ENCODE measurements at regions of chr1 and their contacts with region 1.

Region 1: GRCh38 chr1:150067184-150068036 is at the start of gene VPS45:
- DNase-seq: peak; percentile 93

Region 2: DNA sequence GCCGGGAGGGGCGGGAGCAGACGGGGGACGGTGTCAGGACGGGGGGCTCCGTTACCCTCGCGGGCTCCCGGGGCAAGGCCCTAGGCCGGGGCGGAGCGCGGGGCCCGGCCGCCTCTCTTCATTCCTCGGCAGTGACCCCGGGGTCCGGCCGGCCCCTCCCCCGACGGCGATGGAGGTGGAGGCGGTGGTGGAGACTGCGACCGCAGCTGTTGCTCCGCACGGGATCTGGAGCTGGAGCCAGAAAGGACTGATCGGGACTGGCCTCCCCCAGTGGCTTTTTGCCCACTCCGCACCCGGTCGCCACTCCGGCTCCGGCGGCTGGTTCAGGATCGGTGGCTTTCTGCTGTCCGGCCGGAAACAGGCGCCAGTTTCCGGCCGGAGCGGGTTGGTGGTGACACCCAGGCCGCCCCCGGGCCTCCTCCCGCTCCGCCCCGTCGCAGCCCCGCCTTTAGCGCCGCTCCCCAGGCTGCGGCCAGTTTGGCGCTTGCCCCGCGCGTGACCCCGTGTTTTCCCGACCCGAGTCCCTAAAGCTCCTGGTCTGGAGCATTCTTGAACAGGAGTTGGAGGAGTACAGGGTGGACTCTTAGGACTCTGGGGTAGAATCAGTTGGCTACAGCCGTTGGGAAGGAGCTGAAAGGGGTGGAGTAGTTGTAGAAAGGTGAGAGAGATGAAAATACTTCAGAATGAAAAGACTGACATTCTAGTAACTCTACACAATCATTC is 56.9 kb before region 1 on chr1 and contains the start of gene OTUD7B:
- CTCF ChIA-PET with region 1: no interaction called
- POLR2A ChIA-PET with region 1: interaction called, 26 read pairs
- DNase-seq: peak; percentile 92

Region 3: GRCh38 chr1:150034336-150034735 is 33.1 kb before region 1 on chr1:
- CTCF ChIA-PET with region 1: no interaction called
- POLR2A ChIA-PET with region 1: no interaction called
- DNase-seq: no peak

Region 4: DNA sequence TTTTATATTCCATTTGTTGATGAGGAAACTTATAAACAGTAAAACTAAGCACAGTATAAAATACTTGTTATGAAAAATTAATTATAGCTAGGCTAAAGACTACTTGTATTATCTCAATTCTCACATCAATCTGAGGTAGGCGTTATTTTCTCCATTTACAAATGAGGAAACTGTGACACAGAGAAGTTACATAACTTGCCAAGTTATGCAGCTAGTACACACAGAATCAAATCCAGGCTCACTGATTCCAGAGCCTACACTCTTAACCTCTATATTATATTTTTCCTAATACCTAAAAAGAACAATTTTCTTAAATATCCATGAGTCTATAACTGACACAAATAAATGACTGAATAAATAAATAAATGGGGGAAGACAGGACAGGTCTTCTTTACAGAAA is 11.0 kb before region 1 on chr1:
- CTCF ChIA-PET with region 1: no interaction called
- POLR2A ChIA-PET with region 1: interaction called, 15 read pairs
- DNase-seq: no peak

Region 5: GRCh38 chr1:150127868-150128267 is 60.5 kb after region 1 on chr1:
- CTCF ChIA-PET with region 1: no interaction called
- POLR2A ChIA-PET with region 1: no interaction called
- DNase-seq: no peak

Region 6: DNA sequence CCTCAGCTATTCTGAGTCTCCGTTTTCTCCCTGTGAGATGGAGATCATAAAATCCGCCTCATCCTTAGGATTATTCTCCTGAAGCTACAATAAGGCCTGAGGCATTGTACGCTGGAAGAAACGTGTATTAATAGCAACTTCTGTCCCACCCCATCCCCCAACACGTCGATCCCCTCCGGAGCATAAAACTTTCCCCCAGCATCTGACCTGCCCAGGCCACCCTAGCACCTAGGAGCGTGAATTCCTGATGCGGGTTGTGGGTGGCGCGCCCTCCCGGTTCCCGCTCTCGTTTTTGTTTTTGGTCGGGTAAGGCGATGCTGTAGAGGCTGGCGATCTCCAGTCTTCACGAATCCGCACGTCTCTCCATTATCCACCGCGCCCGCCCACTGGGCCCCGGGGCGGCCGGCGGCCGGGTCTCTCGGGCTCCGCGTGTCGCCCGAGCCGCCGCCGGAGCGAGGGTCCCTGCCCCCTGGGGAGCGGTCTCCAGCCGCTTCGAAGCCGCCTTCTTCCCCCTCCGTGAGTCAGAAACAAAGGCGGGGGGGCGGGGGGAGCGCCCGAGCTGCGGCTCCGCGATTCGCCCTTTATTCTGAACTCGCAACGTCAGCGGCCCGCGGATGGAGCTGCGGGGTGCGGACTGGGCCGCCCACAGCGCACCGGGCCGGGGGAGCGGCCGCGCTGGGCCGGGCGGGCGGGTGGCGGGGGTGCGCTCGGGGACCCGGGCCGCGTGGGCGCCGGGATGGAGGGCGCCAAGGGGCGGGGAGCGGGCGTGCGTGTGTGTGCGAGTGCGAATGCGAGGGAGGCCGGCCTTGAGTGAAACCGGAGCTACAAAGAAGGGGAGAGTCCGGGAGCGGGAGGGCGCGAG is 82.1 kb after region 1 on chr1 and contains the start of gene PLEKHO1:
- CTCF ChIA-PET with region 1: no interaction called
- POLR2A ChIA-PET with region 1: interaction called, 15 read pairs
- DNase-seq: peak; percentile 83

Region 7: DNA sequence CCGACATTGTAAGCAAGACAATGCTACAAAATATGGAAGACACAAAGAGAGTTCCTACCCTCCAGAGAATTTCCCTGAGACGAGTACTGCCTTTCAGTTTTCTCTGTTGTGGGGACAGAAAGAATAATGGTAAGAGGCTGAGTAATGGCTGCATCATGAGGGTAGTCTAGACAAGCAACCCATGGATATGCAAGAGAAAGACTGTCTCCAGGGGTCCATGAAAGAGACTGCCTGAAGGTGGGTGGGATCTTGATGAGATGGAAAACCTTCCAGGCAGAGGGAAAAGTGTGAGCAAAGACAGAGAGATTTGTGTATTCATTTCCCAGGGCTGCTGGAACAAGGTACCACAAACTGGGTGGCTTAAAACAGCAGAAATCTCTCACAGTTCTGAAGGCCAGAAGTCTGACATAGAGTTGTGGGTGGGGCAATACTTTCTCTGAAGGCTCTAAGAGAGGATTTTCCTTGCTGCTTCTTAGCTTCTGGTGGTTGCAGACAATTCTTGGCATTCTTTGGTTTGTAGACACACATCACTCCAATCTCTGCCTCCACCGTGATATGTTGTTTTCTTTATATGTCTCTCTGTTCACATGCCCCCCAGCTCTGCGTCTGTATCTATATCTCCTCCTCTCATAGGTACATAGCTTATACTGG is 127.1 kb after region 1 on chr1:
- CTCF ChIA-PET with region 1: no interaction called
- POLR2A ChIA-PET with region 1: no interaction called
- DNase-seq: no peak

Measured in HEK293T (cell line).